GM13976 (cell line): ENCODE measurements at regions of chr17 and their contacts with region 1.

Region 1: DNA sequence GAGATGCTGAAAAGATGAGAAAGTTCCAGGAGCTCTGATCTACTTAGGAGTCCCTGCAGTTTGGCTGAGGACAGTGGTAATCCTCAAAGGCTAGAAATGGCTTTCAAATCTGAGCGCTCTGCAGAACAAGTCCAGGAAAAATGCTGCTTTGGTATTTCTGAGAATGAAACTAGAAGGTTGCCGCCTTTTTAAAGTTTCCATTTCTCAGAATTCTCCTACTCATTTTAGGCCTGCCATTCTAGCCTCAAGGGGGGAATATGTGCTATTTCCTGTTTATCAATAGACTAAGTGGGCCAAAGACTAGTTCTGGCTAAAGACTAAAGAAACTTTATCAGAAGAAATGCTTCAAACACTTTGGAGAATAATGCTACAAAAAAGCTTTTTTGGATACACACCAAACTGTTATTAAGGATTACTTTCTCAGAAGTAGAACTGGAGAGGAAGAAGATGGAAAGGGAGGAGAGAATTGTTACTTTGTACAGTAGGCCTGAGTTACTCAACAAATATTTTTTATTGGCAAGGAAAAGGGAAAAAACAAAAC is at the start of gene SLFN12L:
- DNase-seq: no peak
- CTCF ChIP-seq: no peak

Region 2: DNA sequence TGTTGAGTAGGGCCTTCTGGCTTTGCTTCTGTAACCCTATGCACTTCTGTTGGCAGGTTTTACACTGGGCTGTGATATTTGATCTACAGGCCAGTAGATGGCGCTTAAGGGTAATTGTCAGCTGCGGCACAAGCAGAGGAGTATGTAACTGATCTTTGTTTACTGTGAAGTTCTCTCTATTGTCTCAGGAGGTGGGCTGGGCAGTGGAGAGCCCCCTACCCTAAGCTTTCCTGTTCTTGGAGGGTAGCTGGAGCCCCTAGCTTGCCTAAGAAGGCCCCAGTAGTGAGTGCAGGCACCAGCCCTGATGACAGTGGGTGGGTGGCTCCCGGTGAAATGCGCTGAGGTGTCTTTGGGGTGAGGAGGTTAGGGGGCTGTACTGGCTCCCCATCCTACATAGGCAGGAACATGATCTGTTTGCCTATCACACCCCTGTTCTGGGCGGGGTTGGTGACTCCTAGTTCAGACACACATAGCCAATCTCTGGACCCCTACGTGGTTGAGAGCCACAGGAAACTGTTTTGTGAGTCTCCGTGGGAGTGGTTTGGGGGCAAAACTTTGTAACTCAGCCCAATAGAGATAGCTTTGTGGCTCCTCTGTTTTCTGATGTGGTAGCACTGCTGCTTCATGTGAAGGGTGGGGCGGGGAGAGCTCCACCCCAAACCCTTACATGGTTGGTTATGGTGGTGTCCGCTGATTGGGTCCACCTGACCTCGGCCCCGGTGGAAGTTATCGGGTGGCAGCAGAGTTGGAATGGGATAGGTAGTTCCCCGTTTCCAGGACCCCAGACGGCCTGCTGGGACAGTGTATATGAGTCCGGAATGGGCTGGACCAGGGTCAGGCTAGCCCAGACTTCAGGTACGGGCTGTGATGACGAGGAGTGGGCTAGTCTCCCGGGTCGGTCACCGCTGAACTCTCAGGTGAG is 224.6 kb before region 1 on chr17:
- in situ Hi-C with region 1: loop called (anchors 10 kb)
- DNase-seq: peak; percentile 66
- CTCF ChIP-seq: peak; percentile 71

Region 3: DNA sequence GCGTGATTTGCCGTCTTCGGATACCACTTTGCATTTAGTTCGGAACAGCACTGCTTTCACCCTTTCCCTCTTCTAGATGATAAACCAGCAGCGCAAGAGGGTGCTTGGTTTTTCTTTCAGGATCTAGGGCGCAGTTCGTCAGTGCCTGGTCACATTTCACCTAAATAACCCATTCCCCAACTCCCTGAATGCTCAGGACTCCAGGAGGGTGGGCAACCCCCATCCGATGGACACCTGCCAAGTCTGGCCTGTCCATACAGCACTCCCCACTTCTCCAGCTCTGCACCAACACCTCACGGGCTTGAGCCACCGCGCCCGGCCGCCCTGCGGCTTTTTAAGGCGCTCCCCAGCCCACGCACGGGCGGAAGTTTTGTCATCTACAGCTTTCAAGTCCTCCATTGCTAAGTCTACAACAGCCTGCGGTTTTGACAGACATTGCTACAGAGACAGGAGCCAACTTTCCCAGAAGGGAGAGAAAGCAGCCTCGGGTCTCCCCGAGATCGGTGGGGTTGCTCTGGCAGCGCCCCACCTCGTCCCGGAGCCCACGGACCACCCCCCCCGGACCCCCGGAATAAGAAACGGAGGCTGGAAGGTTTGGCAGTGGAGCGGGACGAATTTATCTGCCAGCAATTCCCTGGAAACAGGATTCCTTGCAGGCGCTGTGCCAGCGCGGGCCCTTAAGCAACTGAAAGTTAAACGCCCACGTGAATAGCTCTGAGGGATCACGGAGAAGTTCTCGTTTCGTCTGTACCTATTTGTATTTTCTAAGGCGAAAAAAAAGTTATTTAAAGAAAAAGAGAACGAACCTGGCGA is 50.5 kb before region 1 on chr17:
- in situ Hi-C with region 1: no loop called
- DNase-seq: peak; percentile 90
- CTCF ChIP-seq: no peak

Region 4: GRCh38 chr17:35630530-35631148 is 93.0 kb after region 1 on chr17:
- in situ Hi-C with region 1: no loop called
- DNase-seq: no peak
- CTCF ChIP-seq: no peak